Thyroid gland (tissue), 4 donors: ENCODE measurements at regions of chr15 and their contacts with region 1.

Region 1: DNA sequence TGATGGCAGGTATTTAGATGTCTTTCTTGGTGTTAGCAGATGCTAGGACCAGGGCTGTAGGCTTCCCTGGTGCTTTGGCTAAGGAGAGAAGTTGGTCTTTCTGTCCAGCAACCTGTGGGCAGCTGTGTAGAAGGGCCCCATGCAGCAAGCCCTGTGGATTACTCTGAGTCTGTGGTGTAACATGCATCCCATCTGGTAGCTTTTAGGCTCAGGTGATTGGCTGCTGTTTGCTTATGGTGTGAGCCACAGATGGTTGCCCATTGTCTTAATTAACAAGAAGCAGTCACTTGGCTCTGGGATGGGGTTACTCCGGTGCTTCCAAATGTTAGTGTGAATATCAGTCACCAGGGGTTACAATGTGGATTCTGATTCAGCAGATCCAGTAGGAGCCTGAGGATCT is 368.6 kb upstream of the C2CD4B start:
- DNase-seq: no peak
- H3K4me3 ChIP-seq: no peak overlapping the region
- H3K27ac ChIP-seq: no peak overlapping the region
- H3K4me1 ChIP-seq: peaks cover 6 to 9% of the 10 kb centered on the region in 2 donors
- H3K27me3 ChIP-seq: no peaks in the 10 kb centered on the region
- CTCF ChIP-seq: no peak
- POLR2A ChIP-seq: no peak

Region 2: DNA sequence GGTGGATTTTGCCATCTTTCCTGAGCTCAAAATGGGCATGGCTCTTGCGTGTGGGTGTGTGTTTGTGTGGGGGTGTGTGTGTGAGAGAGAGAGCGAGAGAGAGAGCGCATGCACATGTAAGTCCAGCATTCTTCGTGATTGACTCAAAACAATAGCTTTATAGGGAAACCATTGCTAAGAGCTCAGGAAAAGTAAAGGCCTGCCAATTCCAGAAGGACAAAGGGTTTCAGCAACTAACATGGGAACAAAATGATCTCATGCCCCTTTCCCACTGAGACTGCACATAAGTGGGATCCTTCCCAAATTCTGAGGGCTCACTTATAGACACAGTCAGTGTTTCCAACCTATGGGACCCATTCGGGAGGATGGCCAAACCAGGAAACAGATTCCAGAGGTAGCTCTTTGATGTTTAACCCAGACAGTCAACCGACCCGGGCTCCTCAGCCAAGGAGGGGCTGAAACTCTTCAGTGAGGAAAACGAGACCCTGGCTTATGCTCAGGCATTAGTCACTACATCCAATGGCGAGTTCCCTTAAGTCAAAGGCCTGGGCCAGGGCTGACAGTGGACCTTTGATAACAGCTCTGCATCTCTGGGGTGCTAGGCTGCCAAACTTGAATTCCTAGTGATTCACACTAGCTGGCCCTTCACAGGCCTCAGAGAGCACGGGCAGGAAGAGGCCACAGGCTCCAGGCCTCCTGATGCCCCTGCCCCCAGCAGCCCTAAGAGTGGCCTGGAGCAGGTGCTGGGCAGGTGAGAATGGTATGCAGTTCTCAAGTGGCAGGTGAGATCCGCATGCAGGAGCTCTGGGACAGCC is 63.6 kb before region 1 on chr15:
- intact Hi-C with region 1: no loop called
- DNase-seq: peak; percentile 71 to 72
- H3K4me3 ChIP-seq: no peak overlapping the region
- H3K27ac ChIP-seq: peak overlapping the region; percentile 90 to 93 (median 90)
- H3K4me1 ChIP-seq: peaks cover 23 to 50% of the 10 kb centered on the region in 2 donors
- H3K27me3 ChIP-seq: no peaks in the 10 kb centered on the region
- CTCF ChIP-seq: no peak
- POLR2A ChIP-seq: no peak

Region 3: GRCh38 chr15:62588938-62589670 is 55.4 kb after region 1 on chr15:
- intact Hi-C with region 1: loop called (anchors 5 kb)
- DNase-seq: no peak
- H3K4me3 ChIP-seq: no peak overlapping the region
- H3K27ac ChIP-seq: no peak overlapping the region
- H3K4me1 ChIP-seq: peaks cover 0 to 5% of the 10 kb centered on the region in 2 donors
- H3K27me3 ChIP-seq: no peaks in the 10 kb centered on the region
- CTCF ChIP-seq: no peak
- POLR2A ChIP-seq: no peak

Region 4: GRCh38 chr15:62658498-62658897 is 124.8 kb after region 1 on chr15:
- intact Hi-C with region 1: no loop called
- DNase-seq: no peak
- H3K4me3 ChIP-seq: no peak overlapping the region
- H3K27ac ChIP-seq: no peak overlapping the region
- H3K4me1 ChIP-seq: peaks cover 0 to 8% of the 10 kb centered on the region in 2 donors
- H3K27me3 ChIP-seq: no peaks in the 10 kb centered on the region
- CTCF ChIP-seq: no peak
- POLR2A ChIP-seq: no peak

Region 5: GRCh38 chr15:62684123-62684808 is 150.6 kb after region 1 on chr15:
- intact Hi-C with region 1: no loop called
- DNase-seq: no peak
- H3K4me3 ChIP-seq: no peak overlapping the region
- H3K27ac ChIP-seq: no peak overlapping the region
- H3K4me1 ChIP-seq: no peaks in the 10 kb centered on the region
- H3K27me3 ChIP-seq: no peaks in the 10 kb centered on the region
- CTCF ChIP-seq: no peak
- POLR2A ChIP-seq: no peak